GM10248 (cell line): ENCODE measurements at regions of chr15 and their contacts with region 1.

Region 1: GRCh38 chr15:66287461-66288057 is 5.8 kb upstream of the DIS3L start:
- DNase-seq: peak; percentile 37
- CTCF ChIP-seq: peak; percentile 44

Region 2: GRCh38 chr15:66251790-66252684 is 35.5 kb before region 1 on chr15:
- CTCF ChIA-PET with region 1: interaction called, 13 read pairs
- POLR2A ChIA-PET with region 1: interaction called, 6 read pairs
- DNase-seq: peak; percentile 84
- CTCF ChIP-seq: peak; percentile 70